Calu3 (cell line): ENCODE measurements at regions of chr5 and their contacts with region 1.

Region 1: GRCh38 chr5:157476702-157477408 is 16.8 kb downstream of the NIPAL4 start:
- DNase-seq: peak; percentile 63
- H3K4me3 Mint-ChIP-seq: no peak overlapping the region
- H3K27ac Mint-ChIP-seq: no peak overlapping the region
- H3K4me1 Mint-ChIP-seq: peaks cover 8% of the 10 kb centered on the region
- H3K27me3 Mint-ChIP-seq: no peaks in the 10 kb centered on the region
- CTCF ChIP-seq: peak; percentile 84

Region 2: DNA sequence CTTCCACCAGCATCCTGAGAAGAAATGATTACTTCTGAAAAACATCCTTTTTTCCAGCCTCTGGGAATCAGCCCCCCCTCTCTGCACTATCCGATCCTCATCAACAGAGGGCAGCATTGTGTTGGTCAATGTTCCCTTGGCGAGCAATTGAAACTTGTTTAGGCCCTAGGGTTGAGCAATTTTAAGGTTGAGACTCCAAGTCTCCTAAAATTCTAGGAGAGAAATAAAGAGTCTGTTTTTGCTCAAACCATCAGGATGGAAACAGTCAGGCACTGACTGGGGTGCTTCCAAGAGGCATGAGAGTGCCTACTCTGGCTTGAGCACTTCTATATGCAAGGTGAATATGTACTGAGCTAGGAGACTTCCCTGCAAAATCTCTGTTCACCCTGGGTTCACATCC is 223.3 kb before region 1 on chr5:
- CTCF ChIA-PET with region 1: interaction called, 3 read pairs
- intact Hi-C with region 1: loop called (anchors 2 kb)
- DNase-seq: peak; percentile 72
- H3K4me3 Mint-ChIP-seq: no peak overlapping the region
- H3K27ac Mint-ChIP-seq: no peak overlapping the region
- H3K4me1 Mint-ChIP-seq: no peaks in the 10 kb centered on the region
- H3K27me3 Mint-ChIP-seq: peaks cover 15% of the 10 kb centered on the region
- CTCF ChIP-seq: peak; percentile 95

Region 3: DNA sequence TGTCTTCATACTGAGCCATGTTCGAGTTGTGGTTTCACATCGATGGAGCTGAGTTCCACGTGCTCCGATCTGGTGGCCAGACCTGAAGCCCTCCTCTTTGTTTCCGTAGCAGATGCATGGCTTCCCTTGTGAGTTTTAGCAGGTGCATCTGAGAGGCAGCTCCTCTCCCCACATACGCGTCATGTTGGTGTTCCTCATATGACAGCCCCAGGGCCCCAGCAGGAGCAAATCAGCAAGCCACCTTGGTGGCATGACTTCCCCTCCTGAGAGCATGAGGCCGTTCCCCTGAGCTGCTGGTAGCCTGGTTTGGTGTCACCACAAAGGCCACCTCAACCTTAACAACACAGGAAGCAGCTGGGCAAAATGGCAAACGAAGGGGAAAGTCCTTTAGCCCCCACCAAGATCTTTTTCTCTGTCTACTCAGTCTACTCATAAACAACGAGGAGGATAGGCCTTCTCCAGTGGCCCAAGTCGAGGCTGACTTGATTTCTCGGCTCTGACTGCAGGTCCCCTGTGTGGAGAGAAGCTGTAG is 205.0 kb before region 1 on chr5:
- CTCF ChIA-PET with region 1: no interaction called
- intact Hi-C with region 1: no loop called
- DNase-seq: no peak
- H3K4me3 Mint-ChIP-seq: no peak overlapping the region
- H3K27ac Mint-ChIP-seq: no peak overlapping the region
- H3K4me1 Mint-ChIP-seq: peaks cover 23% of the 10 kb centered on the region
- H3K27me3 Mint-ChIP-seq: no peaks in the 10 kb centered on the region
- CTCF ChIP-seq: no peak

Region 4: DNA sequence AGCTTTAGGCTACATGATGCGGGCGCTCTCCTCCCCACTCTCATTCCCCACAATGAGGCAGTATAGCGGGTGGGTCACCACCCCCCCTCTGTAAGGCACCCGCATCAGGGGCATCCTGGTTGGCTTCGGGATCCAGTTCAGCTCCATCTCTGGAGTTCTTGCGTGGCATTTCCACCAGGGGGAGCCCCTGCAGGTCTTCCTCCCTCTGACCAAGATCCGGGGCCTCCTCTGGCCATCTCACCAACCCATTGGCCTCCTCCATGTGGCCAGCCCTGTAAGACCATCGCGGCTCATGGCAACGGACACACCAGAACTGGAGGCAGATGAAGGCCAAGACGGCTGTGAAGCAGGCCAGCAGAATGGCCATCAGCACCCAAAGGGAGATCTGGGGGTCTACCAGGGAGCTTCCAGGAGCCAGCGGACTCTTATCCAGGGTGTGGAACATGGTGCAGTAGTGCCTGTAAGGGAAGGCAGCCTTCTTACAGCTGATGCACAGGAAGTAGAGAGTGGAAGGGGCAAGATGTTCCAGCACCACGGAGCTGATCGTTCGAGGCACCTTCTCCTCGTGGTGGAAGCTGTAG is 133.9 kb before region 1 on chr5:
- CTCF ChIA-PET with region 1: interaction called, 10 read pairs
- intact Hi-C with region 1: loop called (anchors 1 kb)
- DNase-seq: peak; percentile 70
- H3K4me3 Mint-ChIP-seq: no peak overlapping the region
- H3K27ac Mint-ChIP-seq: no peak overlapping the region
- H3K4me1 Mint-ChIP-seq: no peaks in the 10 kb centered on the region
- H3K27me3 Mint-ChIP-seq: no peaks in the 10 kb centered on the region
- CTCF ChIP-seq: peak; percentile 68

Region 5: GRCh38 chr5:157431544-157432200 is 45.2 kb before region 1 on chr5:
- CTCF ChIA-PET with region 1: interaction called, 10 read pairs
- intact Hi-C with region 1: loop called (anchors 1 kb)
- DNase-seq: peak; percentile 52
- H3K4me3 Mint-ChIP-seq: no peak overlapping the region
- H3K27ac Mint-ChIP-seq: no peak overlapping the region
- H3K4me1 Mint-ChIP-seq: no peaks in the 10 kb centered on the region
- H3K27me3 Mint-ChIP-seq: peaks cover 3% of the 10 kb centered on the region
- CTCF ChIP-seq: peak; percentile 48